H1 (cell line): ENCODE measurements at regions of chr12 and their contacts with region 1.

Region 1: GRCh38 chr12:27523642-27524493 is at the start of gene PPFIBP1:
- DNase-seq: peak; percentile 97 to 98
- H3K4me3 ChIP-seq: peak within 1 kb of the TSS; percentile 63 to 86 (median 77)
- H3K27ac ChIP-seq: peak within 1 kb of the TSS; percentile 83
- H3K4me1 ChIP-seq: peaks cover 4 to 12% (median 11%) of the 10 kb centered on the region in 4 experiments
- H3K27me3 ChIP-seq: peaks cover 0 to 3% (median under 1%) of the 10 kb centered on the region in 4 experiments; a peak in 2 of 7 replicates
- CTCF ChIP-seq: peak in 2 of 3 experiments; percentile 13 to 30; a peak in 2 of 4 replicates
- EP300 ChIP-seq: no peak
- POLR2A ChIP-seq: peak; percentile 70 to 91
- RAD21 ChIP-seq: 0 out of 4 replicates have a peak, but pooled peaks of 1 of the 2 experiments have one; percentile 24
- total RNA-seq, gene PPFIBP1: 25.7 and 31.3 TPM in 2 replicates

Region 2: DNA sequence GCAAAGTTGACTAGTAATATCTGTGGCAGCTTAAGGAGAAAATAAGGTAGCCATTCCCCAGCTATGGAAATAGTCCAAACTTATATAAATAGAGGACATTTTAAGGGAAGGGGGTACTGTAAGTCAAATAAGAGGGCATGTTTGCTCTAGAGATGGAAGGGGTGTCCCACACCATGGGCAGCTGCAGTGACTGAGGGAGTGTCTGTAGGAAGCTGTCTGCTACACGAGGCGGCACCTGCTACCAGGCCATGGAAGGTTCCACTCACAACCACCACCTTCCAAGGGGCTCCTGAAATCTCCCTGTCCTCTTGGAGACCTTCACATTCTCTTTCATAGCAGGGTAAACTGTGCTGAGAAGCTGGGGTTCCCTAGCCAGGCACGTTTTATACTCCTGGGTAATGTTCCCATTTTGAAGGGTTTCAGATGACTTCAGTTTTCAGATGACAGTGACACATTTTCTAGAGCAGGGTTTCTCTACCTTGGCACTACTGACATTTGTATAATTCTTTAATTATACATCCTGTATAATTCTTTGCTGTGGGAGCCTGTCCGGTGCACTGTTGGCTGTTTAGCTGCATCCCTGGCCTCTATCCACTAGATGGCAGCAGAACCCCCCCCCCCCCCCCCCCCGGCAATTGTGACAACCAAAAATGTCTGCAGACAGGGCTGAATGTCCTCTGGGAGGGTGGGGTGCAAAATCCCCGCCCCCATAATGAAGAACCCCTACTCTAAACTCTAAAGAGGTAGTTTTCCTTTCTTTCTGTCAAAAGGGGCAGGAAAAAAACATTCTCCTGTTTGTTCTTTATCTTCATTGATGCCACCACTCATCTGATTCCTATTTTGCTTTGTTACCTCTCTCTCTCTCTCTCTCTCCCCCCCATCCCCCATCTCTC is 88.9 kb before region 1 on chr12:
- CTCF ChIA-PET with region 1: interaction called, 3 read pairs
- POLR2A ChIA-PET with region 1: interaction called, 18 read pairs
- DNase-seq: no peak
- H3K4me3 ChIP-seq: no peak overlapping the region
- H3K27ac ChIP-seq: no peak overlapping the region
- H3K4me1 ChIP-seq: no peaks in the 10 kb centered on the region; a peak in 1 of 7 replicates
- H3K27me3 ChIP-seq: no peaks in the 10 kb centered on the region
- CTCF ChIP-seq: peak in 2 of 3 experiments; percentile 21 to 28; a peak in 1 of 4 replicates
- EP300 ChIP-seq: no peak
- POLR2A ChIP-seq: no peak
- RAD21 ChIP-seq: 0 out of 4 replicates have a peak, but pooled peaks of 1 of the 2 experiments have one; percentile 6

Region 3: DNA sequence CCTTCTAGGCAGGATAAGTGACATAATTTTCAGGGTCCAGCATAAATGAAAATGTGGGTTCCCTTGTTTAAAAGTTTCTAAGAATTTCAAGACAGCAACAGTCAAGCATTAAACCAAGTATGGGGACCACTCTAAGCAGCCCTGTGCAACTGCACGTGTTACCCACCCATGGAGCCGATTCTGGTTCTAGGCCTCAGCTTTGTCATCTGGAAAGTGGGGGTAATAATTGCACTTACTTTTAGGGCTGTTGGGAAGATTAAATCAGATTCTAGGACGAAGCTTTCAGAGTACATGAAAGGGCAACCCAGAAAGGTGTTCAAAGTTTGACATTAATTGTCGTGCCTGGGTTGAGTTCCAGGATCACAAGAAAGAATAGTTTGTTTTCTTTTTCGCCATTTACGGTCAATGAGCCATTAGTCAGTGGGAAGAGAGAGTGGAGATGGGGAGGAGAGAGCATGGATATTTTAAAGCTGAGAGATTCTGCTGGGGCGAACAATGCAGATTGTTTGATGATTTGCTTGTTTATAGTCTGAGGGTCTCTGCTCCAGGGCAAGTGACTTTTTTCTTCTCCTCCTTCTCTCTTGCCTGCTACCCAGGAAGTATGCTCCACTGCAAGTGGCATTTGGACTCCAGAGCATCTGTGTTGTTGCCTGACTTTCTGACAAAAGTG is 10.6 kb before region 1 on chr12:
- CTCF ChIA-PET with region 1: no interaction called
- POLR2A ChIA-PET with region 1: interaction called, 12 read pairs
- DNase-seq: no peak
- H3K4me3 ChIP-seq: no peak overlapping the region
- H3K27ac ChIP-seq: no peak overlapping the region
- H3K4me1 ChIP-seq: no peaks in the 10 kb centered on the region; a peak in 1 of 7 replicates
- H3K27me3 ChIP-seq: no peaks in the 10 kb centered on the region
- CTCF ChIP-seq: no peak
- EP300 ChIP-seq: no peak
- POLR2A ChIP-seq: no peak
- RAD21 ChIP-seq: no peak

Region 4: GRCh38 chr12:27539191-27539631 is 15.3 kb after region 1 on chr12:
- CTCF ChIA-PET with region 1: interaction called, 3 read pairs
- POLR2A ChIA-PET with region 1: interaction called, 16 read pairs
- DNase-seq: no peak
- H3K4me3 ChIP-seq: no peak overlapping the region
- H3K27ac ChIP-seq: no peak overlapping the region
- H3K4me1 ChIP-seq: peaks cover 0 to 10% (median 5%) of the 10 kb centered on the region in 4 experiments; a peak in 5 of 7 replicates
- H3K27me3 ChIP-seq: no peaks in the 10 kb centered on the region; a peak in 1 of 7 replicates
- CTCF ChIP-seq: no peak
- EP300 ChIP-seq: no peak
- POLR2A ChIP-seq: no peak
- RAD21 ChIP-seq: no peak

Region 5: GRCh38 chr12:27652174-27652763 is 128.4 kb after region 1 on chr12:
- CTCF ChIA-PET with region 1: no interaction called
- POLR2A ChIA-PET with region 1: no interaction called
- DNase-seq: no peak
- H3K4me3 ChIP-seq: no peak overlapping the region
- H3K27ac ChIP-seq: no peak overlapping the region
- H3K4me1 ChIP-seq: no peaks in the 10 kb centered on the region
- H3K27me3 ChIP-seq: no peaks in the 10 kb centered on the region
- CTCF ChIP-seq: peak in 2 of 3 experiments; percentile 77; a peak in 3 of 4 replicates
- EP300 ChIP-seq: no peak
- POLR2A ChIP-seq: no peak
- RAD21 ChIP-seq: peak; percentile 80 to 84